ENCODE measurements at regions of chr13 and their contacts with region 1.

Region 1: DNA sequence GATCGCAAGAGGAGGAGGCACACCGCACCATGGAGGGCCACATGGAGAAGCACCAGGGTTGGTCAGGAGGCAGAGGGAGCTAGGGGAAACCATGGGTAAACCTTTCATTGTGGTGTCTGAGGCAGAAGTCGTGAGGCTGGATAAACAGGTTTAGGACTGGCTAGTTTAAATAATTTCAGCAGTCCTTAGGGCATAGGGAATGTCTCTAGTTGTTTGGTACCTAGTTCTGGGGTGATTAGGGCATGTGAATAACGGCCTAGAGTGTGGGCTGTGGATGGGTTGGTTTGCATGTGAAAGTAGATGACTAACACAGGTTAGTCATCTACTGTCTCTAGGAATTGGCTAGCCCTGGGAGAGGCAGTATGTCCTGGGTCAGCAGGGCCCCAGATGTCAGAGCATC is 102.3 kb downstream of the STOML3 start:
- DNase-seq: no peak
- ATAC-seq: no peak
- H3K4me3 ChIP-seq: no peak overlapping the region
- H3K27ac ChIP-seq: no peak overlapping the region
- H3K4me1 ChIP-seq: no peaks in the 10 kb centered on the region
- H3K27me3 ChIP-seq: no peaks in the 10 kb centered on the region
- CTCF ChIP-seq: no peak
- EP300 ChIP-seq: no peak
- POLR2A ChIP-seq: no peak
- RAD21 ChIP-seq: no peak

Region 2: DNA sequence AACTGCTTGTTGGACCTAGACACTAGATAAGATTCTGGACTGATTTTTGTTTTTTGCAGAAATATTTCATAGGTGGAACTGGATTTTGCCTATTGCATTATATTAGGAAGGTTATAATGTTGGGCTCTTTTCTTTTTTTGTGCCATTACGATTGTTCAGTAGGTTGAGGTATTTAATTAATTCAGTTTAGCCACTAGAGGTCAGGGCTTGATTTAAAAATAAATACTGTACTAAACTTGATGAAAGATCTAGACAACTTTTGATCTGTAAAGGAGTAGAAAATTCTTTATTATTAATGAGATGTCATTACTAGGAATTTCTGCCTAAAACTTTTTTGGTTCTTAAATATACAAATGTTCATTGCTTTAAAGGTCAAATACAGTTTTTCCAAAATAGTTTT is 1813.6 kb before region 1 on chr13:
- CTCF ChIA-PET with region 1: no interaction called
- POLR2A ChIA-PET with region 1: no interaction called
- in situ Hi-C with region 1: loop called (anchors 25 kb)
- intact Hi-C with region 1: no loop called
- DNase-seq: no peak
- ATAC-seq: peak; percentile 57; the same call in 1 of the 3 replicates
- H3K4me3 ChIP-seq: no peak overlapping the region
- H3K27ac ChIP-seq: no peak overlapping the region
- H3K4me1 ChIP-seq: peaks cover 0 to 3% of the 10 kb centered on the region in 2 experiments; a peak in 1 of 5 replicates
- H3K27me3 ChIP-seq: peaks cover 0 to 14% of the 10 kb centered on the region in 2 experiments; a peak in 1 of 5 replicates
- CTCF ChIP-seq: peak in 1 of 3 experiments; percentile 36; a peak in 2 of 6 replicates
- EP300 ChIP-seq: no peak
- POLR2A ChIP-seq: no peak
- RAD21 ChIP-seq: peak; percentile 18 to 41; a peak in 2 of 4 replicates

Region 3: DNA sequence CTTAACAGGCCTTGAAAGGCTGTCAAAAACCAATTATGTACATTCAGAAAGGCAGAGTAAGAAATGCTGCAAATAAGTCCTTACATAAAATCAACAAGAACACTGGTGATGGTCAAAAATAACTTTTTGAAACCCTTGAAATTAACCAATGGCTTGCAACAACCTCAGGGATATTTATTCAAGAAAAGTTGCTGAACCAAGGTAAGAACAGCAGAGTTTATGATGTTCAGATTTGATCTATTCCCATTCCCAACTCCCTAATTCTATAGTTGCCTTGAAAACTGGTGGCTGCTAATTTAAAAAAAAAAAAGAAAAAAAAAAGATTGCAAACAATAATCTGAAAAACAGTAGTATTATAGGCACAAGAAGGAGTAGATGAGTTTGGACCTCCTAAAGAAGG is 648.4 kb before region 1 on chr13:
- CTCF ChIA-PET with region 1: no interaction called
- POLR2A ChIA-PET with region 1: no interaction called
- in situ Hi-C with region 1: no loop called
- intact Hi-C with region 1: no loop called
- DNase-seq: no peak
- ATAC-seq: no peak
- H3K4me3 ChIP-seq: no peak overlapping the region
- H3K27ac ChIP-seq: no peak overlapping the region
- H3K4me1 ChIP-seq: no peaks in the 10 kb centered on the region
- H3K27me3 ChIP-seq: no peaks in the 10 kb centered on the region
- CTCF ChIP-seq: no peak
- EP300 ChIP-seq: no peak
- POLR2A ChIP-seq: no peak
- RAD21 ChIP-seq: no peak